ENCODE measurements at regions of chr10 and their contacts with region 1.

Region 1: GRCh38 chr10:37495415-37495814 is 362.0 kb downstream of the ZNF248 start:
- DNase-seq: peak; percentile 23
- H3K4me3 ChIP-seq: no peak overlapping the region
- H3K27ac ChIP-seq: no peak overlapping the region
- H3K4me1 ChIP-seq: no peaks in the 10 kb centered on the region
- H3K27me3 ChIP-seq: no peaks in the 10 kb centered on the region
- CTCF ChIP-seq: peak; percentile 3 to 20

Region 2: GRCh38 chr10:36899651-36900050 is 595.8 kb before region 1 on chr10:
- CTCF ChIA-PET with region 1: no interaction called
- dilution Hi-C with region 1: no loop called
- in situ Hi-C with region 1: no loop called
- intact Hi-C with region 1: loop called (anchors 2 kb)
- DNase-seq: no peak
- H3K4me3 ChIP-seq: no peak overlapping the region
- H3K27ac ChIP-seq: no peak overlapping the region
- H3K4me1 ChIP-seq: no peaks in the 10 kb centered on the region
- H3K27me3 ChIP-seq: no peaks in the 10 kb centered on the region
- CTCF ChIP-seq: no peak

Region 3: GRCh38 chr10:37246639-37247038 is 248.8 kb before region 1 on chr10:
- CTCF ChIA-PET with region 1: no interaction called
- dilution Hi-C with region 1: no loop called
- in situ Hi-C with region 1: no loop called
- intact Hi-C with region 1: loop called (anchors 1 kb)
- DNase-seq: no peak
- H3K4me3 ChIP-seq: no peak overlapping the region
- H3K27ac ChIP-seq: no peak overlapping the region
- H3K4me1 ChIP-seq: no peaks in the 10 kb centered on the region
- H3K27me3 ChIP-seq: no peaks in the 10 kb centered on the region
- CTCF ChIP-seq: no peak

Region 4: DNA sequence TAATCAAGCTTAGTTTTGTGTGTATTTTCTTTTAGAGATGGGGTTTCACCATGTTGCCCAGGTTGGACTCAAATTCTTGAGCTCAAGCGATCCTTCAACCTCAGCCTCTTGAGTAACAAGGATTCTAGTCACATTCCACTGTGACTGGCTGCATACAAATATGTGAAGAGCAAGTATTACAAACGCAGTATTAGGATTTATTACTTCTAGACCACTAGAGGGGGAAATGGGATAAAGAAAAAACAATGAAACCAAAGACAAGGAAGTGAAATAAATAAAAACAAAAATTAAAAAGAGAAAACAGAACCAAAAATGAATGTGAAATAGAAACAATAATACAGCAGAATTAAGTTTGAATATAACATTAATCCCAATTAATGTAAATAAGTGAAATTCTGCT is 61.3 kb before region 1 on chr10:
- CTCF ChIA-PET with region 1: interaction called, 3 read pairs
- dilution Hi-C with region 1: no loop called
- in situ Hi-C with region 1: no loop called
- intact Hi-C with region 1: loop called (anchors 1 kb)
- DNase-seq: peak; percentile 34
- H3K4me3 ChIP-seq: no peak overlapping the region
- H3K27ac ChIP-seq: no peak overlapping the region
- H3K4me1 ChIP-seq: no peaks in the 10 kb centered on the region
- H3K27me3 ChIP-seq: no peaks in the 10 kb centered on the region
- CTCF ChIP-seq: no peak

Region 5: DNA sequence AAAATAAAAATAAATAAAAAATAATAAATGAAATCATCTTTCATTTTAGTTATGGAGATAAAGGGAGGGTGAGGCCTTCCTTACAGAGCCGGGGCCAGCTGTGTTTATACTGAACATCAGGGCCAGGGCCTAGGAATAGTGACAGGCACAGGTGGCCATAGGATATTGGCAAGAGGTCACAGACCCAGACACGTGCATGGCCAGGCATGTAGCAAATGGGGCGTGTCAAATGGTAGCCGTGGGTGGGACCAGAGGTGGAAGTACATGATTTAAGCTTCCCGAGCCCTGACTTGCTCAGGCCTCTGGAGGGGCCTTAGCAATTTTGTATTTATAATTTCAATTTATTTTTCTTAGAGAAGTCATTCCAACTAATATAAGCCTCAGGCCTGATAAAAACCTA is 17.0 kb before region 1 on chr10:
- CTCF ChIA-PET with region 1: interaction called, 22 read pairs
- dilution Hi-C with region 1: no loop called
- in situ Hi-C with region 1: no loop called
- intact Hi-C with region 1: no loop called
- DNase-seq: no peak
- H3K4me3 ChIP-seq: no peak overlapping the region
- H3K27ac ChIP-seq: no peak overlapping the region
- H3K4me1 ChIP-seq: no peaks in the 10 kb centered on the region
- H3K27me3 ChIP-seq: no peaks in the 10 kb centered on the region
- CTCF ChIP-seq: no peak

Region 6: DNA sequence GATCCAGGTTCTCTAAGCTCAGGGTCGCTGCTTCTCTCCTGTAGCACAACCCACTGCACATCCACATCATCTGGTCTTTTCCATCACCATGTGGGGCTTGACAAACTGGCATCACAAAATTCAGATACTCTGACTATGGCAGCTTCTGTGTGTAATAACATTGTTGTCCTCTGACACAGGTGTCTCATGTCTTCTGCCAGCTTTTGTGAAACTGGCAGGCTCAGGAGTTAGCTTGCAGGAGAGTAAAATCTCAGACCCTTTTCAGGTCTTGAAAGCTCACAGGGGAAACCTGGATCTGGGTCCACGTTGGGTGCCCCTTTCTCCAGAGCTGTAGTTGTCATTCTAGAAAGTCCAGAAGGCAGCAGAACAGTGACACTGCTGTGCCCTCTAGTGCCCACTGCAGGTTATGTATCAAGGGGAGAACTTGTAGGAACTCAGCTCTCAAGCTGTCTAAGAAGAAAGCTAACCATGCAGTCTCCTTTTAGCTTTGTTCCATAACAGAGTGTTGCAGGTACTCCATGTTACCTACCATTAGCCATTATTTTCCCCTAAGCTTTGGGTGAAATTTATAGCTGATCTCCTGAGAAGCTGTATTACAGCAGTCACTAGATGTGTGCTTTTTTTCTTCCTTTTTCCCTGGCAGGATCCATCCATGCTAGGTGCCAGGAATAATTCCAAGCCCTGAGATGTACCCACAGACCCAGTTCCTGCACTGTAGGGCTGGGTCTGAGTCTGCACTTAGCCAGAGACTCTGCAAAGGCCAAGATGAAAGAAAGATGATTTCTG is 259.3 kb after region 1 on chr10:
- CTCF ChIA-PET with region 1: interaction called, 3 read pairs
- dilution Hi-C with region 1: no loop called
- in situ Hi-C with region 1: no loop called
- intact Hi-C with region 1: loop called (anchors 5 kb)
- DNase-seq: peak; percentile 17
- H3K4me3 ChIP-seq: no peak overlapping the region
- H3K27ac ChIP-seq: no peak overlapping the region
- H3K4me1 ChIP-seq: no peaks in the 10 kb centered on the region
- H3K27me3 ChIP-seq: no peaks in the 10 kb centered on the region
- CTCF ChIP-seq: peak; percentile 19 to 54